ENCODE measurements at regions of chr1 and their contacts with region 1.

Region 1: DNA sequence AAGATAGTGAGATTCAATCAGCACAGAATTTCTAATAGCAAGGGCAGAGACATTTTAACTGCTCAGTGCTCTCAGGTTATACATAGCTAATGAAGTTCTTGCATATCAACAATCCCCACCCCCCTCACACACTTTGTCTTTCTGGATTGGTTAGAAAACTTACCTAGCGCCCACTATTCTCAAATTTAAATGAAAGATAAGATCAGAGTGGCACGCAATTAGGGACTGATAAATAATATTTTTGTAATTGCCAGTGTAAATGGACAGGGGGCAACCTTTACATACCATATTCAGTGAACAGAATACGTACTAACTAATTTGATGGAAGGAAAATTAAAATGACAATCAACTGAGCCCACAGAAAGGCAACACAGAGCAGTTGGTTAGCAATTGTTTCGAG is 11.7 kb downstream of the SELL start:
- DNase-seq: no peak
- ATAC-seq: no peak
- H3K4me3 ChIP-seq: no peak overlapping the region
- H3K27ac ChIP-seq: peak overlapping the region; percentile 38; the same call in 1 of the 2 replicates
- H3K4me1 ChIP-seq: peaks cover 40% of the 10 kb centered on the region
- H3K27me3 ChIP-seq: no peaks in the 10 kb centered on the region
- CTCF ChIP-seq: no peak
- EP300 ChIP-seq: no peak
- POLR2A ChIP-seq: no peak
- RAD21 ChIP-seq: no peak

Region 2: DNA sequence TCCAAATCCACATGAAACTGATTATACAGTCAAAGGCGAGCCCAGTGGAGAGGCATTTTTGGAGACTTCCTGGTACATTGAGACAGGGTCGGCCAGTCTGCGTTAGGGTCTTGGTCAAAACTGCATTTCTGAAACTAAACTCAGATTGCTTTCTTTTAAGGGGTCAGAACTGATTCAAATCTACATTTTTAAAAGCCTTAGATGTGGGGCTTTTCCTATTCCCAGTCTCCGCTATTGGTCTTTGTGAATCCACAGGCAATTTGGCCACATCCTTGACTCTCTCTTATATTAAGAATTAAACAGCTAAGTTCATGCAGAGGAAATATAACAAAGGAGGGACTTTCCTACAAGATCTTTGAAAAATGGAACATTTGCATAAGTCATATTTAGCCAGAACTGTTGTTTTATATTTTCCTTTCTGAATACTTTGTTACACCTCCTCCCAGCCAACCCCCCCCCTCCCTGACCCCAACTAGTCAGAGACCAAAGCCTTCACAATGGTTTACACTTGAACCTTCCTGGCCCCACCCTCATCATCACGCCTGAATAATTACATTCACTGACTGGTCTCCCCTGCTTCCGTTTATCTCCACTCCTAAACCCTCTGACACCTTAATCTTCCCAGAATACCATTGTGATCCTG is 19.2 kb before region 1 on chr1:
- CTCF ChIA-PET with region 1: interaction called, 125 read pairs
- POLR2A ChIA-PET with region 1: interaction called, 64 read pairs
- RAD21 ChIA-PET with region 1: interaction called, 71 read pairs
- SMC1A ChIA-PET with region 1: interaction called, 176 read pairs
- in situ Hi-C with region 1: no loop called
- intact Hi-C with region 1: loop called (anchors 2 kb)
- DNase-seq: peak; percentile 73
- ATAC-seq: peak; percentile 88
- H3K4me3 ChIP-seq: peak overlapping the region; percentile 37
- H3K27ac ChIP-seq: peak overlapping the region; percentile 76
- H3K4me1 ChIP-seq: peaks cover 49% of the 10 kb centered on the region
- H3K27me3 ChIP-seq: no peaks in the 10 kb centered on the region
- CTCF ChIP-seq: no peak
- EP300 ChIP-seq: no peak
- POLR2A ChIP-seq: no peak
- RAD21 ChIP-seq: no peak

Region 3: GRCh38 chr1:170063109-170063826 is 363.6 kb after region 1 on chr1:
- CTCF ChIA-PET with region 1: no interaction called
- POLR2A ChIA-PET with region 1: no interaction called
- RAD21 ChIA-PET with region 1: no interaction called
- SMC1A ChIA-PET with region 1: no interaction called
- in situ Hi-C with region 1: no loop called
- intact Hi-C with region 1: no loop called
- DNase-seq: no peak
- ATAC-seq: no peak
- H3K4me3 ChIP-seq: no peak overlapping the region
- H3K27ac ChIP-seq: no peak overlapping the region
- H3K4me1 ChIP-seq: no peaks in the 10 kb centered on the region
- H3K27me3 ChIP-seq: no peaks in the 10 kb centered on the region
- CTCF ChIP-seq: no peak
- EP300 ChIP-seq: no peak
- POLR2A ChIP-seq: no peak
- RAD21 ChIP-seq: no peak

Measured in GM12878 (cell line).